Caco-2 (cell line): ENCODE measurements at regions of chr15 and their contacts with region 1.

Region 1: DNA sequence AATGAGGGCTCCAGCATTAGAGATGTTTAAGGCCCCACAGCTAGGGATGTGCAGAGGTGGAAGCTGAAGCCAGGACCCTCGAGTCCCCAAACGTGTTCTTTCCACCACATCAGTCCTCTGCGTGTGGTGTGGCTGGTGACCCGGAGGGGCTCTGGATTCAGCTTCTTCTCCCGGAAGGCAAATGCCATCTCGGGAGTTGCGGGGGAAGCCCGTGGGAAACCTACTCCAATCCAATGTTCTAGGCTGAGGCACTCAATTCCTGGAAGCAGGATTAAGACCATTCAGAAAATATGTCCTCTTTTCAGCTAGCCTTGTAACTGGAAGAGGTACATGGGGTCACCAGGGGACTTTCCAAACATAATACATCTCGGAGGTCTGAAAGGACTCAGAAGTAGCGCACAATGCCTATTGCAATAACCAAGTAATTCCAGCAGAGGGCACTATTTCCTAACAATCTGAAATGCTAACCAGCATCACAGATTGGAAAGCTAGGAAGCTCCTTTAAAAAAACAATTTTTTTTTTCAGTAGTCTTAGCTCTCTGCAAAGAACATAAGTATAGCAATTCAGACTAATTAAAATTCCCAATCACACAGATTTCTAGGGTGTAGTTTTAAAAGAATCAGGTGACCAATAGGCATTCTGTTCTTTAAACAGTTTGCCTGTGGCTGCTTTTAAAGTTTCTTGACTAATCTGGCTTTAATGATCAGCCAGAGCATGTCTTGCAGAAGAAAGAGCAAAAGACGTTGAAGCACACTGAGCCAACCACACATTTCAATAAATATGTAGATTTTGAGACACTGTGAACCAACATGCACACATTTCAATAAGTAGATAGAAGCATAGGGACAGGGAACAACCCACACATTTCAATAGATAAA is 36.1 kb downstream of the BNC1 start:
- DNase-seq: peak in 1 of 2 experiments; percentile 66
- H3K4me3 ChIP-seq: no peak overlapping the region
- H3K4me3 Mint-ChIP-seq: no peak overlapping the region
- H3K27ac Mint-ChIP-seq: no peak overlapping the region
- H3K4me1 ChIP-seq: no peaks in the 10 kb centered on the region
- H3K4me1 Mint-ChIP-seq: no peaks in the 10 kb centered on the region
- H3K27me3 ChIP-seq: no peaks in the 10 kb centered on the region
- H3K27me3 Mint-ChIP-seq: peaks cover 10% of the 10 kb centered on the region
- CTCF ChIP-seq: peak; percentile 73 to 87

Region 2: GRCh38 chr15:83323296-83323711 is 74.9 kb after region 1 on chr15:
- CTCF ChIA-PET with region 1: interaction called, 3 read pairs
- POLR2A ChIA-PET with region 1: no interaction called
- intact Hi-C with region 1: loop called (anchors 5 kb)
- DNase-seq: peak; percentile 73 to 83
- H3K4me3 ChIP-seq: 0 out of 2 replicates have a peak overlapping the region, but pooled peaks have one; percentile 3
- H3K4me3 Mint-ChIP-seq: peak overlapping the region; percentile 64
- H3K27ac Mint-ChIP-seq: peak overlapping the region; percentile 77
- H3K4me1 ChIP-seq: peaks cover 13% of the 10 kb centered on the region
- H3K4me1 Mint-ChIP-seq: no peaks in the 10 kb centered on the region
- H3K27me3 ChIP-seq: no peaks in the 10 kb centered on the region
- H3K27me3 Mint-ChIP-seq: no peaks in the 10 kb centered on the region
- CTCF ChIP-seq: no peak

Region 3: DNA sequence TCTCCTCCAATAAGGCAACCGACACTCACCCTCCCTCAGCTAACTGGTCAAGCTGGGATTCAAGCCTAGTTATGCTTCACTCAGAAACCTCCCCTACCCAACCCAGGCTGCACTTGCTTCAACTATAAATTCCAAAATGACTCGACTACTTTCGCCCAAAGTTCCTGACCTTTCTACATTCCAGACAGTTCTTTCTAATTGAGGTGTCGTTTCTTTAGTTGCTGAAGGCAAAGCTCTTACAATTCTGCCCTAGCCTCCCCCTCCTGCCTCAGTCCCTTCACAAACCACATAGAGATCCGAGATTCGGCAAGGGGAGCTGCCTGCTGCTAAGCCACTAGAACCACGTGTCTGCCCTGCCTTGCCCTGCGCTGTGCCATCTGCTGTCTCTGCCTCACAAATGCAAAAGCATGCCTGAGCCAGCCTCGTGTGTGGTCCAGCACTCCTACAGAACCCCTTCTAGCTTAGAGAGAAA is 124.1 kb after region 1 on chr15:
- CTCF ChIA-PET with region 1: interaction called, 4 read pairs
- POLR2A ChIA-PET with region 1: no interaction called
- intact Hi-C with region 1: loop called (anchors 2 kb)
- DNase-seq: no peak
- H3K4me3 ChIP-seq: no peak overlapping the region
- H3K4me3 Mint-ChIP-seq: no peak overlapping the region
- H3K27ac Mint-ChIP-seq: no peak overlapping the region
- H3K4me1 ChIP-seq: 0 out of 2 replicates have a peak, but pooled peaks cover 6% of the 10 kb centered on the region
- H3K4me1 Mint-ChIP-seq: peaks cover 7% of the 10 kb centered on the region
- H3K27me3 ChIP-seq: no peaks in the 10 kb centered on the region
- H3K27me3 Mint-ChIP-seq: peaks cover 29% of the 10 kb centered on the region
- CTCF ChIP-seq: no peak

Region 4: DNA sequence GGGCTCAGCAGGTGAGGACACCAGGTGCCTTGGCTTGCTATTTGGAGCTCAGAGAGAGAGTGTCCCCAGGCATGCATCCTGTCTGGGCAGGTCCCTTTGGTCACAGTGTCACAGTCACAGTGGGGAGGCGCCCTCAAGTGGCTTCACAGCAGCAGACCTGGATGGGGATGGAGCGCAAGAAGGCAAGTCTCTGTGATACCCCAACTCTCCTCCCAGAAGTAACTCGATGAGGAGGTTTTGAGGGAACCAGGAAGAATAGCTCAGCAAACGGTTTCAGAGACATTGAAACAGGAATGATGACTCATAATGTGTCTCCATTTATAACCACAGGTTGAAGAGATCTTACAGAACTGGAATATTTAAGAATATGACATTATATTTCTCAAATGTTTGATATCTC is 132.3 kb after region 1 on chr15:
- CTCF ChIA-PET with region 1: interaction called, 38 read pairs
- POLR2A ChIA-PET with region 1: no interaction called
- intact Hi-C with region 1: loop called (anchors 2 kb)
- DNase-seq: peak; percentile 78
- H3K4me3 ChIP-seq: no peak overlapping the region
- H3K4me3 Mint-ChIP-seq: no peak overlapping the region
- H3K27ac Mint-ChIP-seq: no peak overlapping the region
- H3K4me1 ChIP-seq: no peaks in the 10 kb centered on the region
- H3K4me1 Mint-ChIP-seq: peaks cover 5% of the 10 kb centered on the region
- H3K27me3 ChIP-seq: no peaks in the 10 kb centered on the region
- H3K27me3 Mint-ChIP-seq: peaks cover 4% of the 10 kb centered on the region
- CTCF ChIP-seq: peak; percentile 57 to 82

Region 5: GRCh38 chr15:83559310-83559966 is 311.0 kb after region 1 on chr15:
- CTCF ChIA-PET with region 1: interaction called, 3 read pairs
- POLR2A ChIA-PET with region 1: no interaction called
- intact Hi-C with region 1: loop called (anchors 1 kb)
- DNase-seq: peak; percentile 57 to 75
- H3K4me3 ChIP-seq: no peak overlapping the region
- H3K4me3 Mint-ChIP-seq: no peak overlapping the region
- H3K27ac Mint-ChIP-seq: no peak overlapping the region
- H3K4me1 ChIP-seq: no peaks in the 10 kb centered on the region
- H3K4me1 Mint-ChIP-seq: no peaks in the 10 kb centered on the region
- H3K27me3 ChIP-seq: no peaks in the 10 kb centered on the region
- H3K27me3 Mint-ChIP-seq: peaks cover 3% of the 10 kb centered on the region
- CTCF ChIP-seq: peak; percentile 75 to 78